ENCODE measurements at regions of chr12 and their contacts with region 1.

Region 1: DNA sequence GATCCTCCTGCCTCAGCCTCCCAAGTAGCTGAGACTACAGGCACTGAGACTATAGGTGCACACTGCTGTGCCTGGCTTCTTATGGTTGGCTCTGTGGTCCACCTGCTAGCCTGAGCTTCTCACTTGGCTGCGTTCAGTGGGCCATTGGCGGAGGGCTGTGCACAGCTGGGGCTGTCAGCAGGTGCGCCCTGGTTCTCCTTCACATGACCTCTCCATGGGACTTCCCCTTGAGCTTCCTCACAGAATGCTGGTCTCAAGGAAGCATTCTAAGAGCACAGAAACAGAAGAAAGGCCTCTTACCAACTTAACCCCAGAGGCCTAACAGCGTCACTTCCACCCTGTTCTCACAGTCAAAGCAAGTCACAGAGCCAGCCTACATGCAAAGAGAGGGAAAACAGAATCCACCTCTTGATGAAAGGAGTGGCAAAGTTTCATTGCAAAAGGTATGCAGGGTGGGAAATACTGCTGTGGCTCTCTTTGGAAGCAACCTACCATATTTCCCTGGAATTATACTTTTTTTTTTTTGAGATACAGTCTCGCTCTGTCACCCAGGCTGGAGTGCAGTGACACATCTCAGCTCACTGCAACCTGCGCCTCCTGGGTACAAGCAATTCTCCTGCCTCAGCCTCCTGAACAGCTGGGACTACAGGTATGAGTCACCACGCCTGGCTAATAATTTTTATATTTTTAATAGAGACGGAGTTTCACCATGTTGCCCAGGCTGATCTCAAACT is 9.3 kb downstream of the RILPL2 start:
- DNase-seq: peak; percentile 67
- ATAC-seq: peak; percentile 88
- H3K4me3 Mint-ChIP-seq: peak overlapping the region; percentile 75
- H3K27ac Mint-ChIP-seq: peak overlapping the region; percentile 93
- H3K4me1 Mint-ChIP-seq: peaks cover 39% of the 10 kb centered on the region
- H3K27me3 Mint-ChIP-seq: no peaks in the 10 kb centered on the region
- CTCF ChIP-seq: no peak

Region 2: GRCh38 chr12:123126186-123127006 is 300.8 kb before region 1 on chr12:
- CTCF ChIA-PET with region 1: no interaction called
- POLR2A ChIA-PET with region 1: no interaction called
- intact Hi-C with region 1: no loop called
- DNase-seq: no peak
- ATAC-seq: no peak
- H3K4me3 Mint-ChIP-seq: no peak overlapping the region
- H3K27ac Mint-ChIP-seq: no peak overlapping the region
- H3K4me1 Mint-ChIP-seq: peaks cover 47% of the 10 kb centered on the region
- H3K27me3 Mint-ChIP-seq: peaks cover 3% of the 10 kb centered on the region
- CTCF ChIP-seq: no peak

Region 3: GRCh38 chr12:123382684-123383083 is 44.5 kb before region 1 on chr12:
- CTCF ChIA-PET with region 1: no interaction called
- POLR2A ChIA-PET with region 1: interaction called, 12 read pairs
- intact Hi-C with region 1: loop called (anchors 1 kb)
- DNase-seq: no peak
- ATAC-seq: no peak
- H3K4me3 Mint-ChIP-seq: peak overlapping the region; percentile 60
- H3K27ac Mint-ChIP-seq: no peak overlapping the region
- H3K4me1 Mint-ChIP-seq: peaks cover 16% of the 10 kb centered on the region
- H3K27me3 Mint-ChIP-seq: no peaks in the 10 kb centered on the region
- CTCF ChIP-seq: no peak

Region 4: GRCh38 chr12:123401753-123402683 is 25.2 kb before region 1 on chr12:
- CTCF ChIA-PET with region 1: no interaction called
- POLR2A ChIA-PET with region 1: interaction called, 11 read pairs
- intact Hi-C with region 1: loop called (anchors 1 kb)
- DNase-seq: no peak
- ATAC-seq: no peak
- H3K4me3 Mint-ChIP-seq: no peak overlapping the region
- H3K27ac Mint-ChIP-seq: peak overlapping the region; percentile 8
- H3K4me1 Mint-ChIP-seq: peaks cover 8% of the 10 kb centered on the region
- H3K27me3 Mint-ChIP-seq: no peaks in the 10 kb centered on the region
- CTCF ChIP-seq: no peak

Region 5: DNA sequence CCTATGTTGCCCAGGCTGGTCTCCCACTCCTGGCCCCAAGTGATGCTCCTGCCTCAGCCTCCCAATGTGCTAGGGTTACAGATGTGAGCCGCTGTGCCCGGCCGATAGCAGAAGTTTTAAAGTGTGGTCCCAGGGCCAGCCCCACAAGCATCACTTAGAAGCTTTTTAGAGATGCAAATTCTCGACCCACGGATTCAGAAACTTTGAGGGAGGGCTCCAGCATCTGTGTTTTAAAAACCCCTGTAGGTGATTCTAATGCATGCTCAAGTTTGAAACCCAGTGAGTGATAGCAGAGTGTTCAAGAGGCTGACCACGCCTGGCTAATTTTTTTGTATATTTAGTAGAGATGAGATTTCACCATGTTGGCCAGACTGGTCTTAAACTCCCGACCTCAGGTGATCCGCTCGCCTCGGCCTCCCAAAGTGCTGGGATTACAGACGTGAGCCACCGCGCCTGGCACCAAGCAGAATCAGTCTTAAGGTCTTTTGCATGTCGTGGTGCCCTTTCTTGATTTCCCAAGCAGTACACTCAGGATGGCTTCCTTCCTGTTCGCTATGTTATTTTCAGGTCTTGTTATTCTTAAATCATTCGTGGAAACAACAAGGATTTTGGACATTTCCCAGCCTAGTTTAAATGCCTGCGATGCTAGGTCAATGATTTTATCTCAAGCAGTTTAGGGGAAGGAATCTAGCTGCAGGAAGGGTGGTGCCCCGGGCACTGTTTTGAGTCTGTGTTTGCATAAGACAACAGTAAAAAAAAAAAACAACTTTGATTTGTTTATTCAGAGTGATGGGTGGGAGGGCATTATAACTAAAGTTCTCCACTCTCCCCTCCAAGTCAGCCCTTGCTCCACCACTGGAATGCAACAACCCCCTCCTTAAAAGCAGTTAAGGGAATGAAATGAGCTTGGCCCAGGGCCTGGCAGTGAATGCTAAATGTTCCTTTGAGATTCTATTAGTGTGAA is 18.5 kb after region 1 on chr12:
- CTCF ChIA-PET with region 1: interaction called, 5 read pairs
- POLR2A ChIA-PET with region 1: interaction called, 29 read pairs
- intact Hi-C with region 1: loop called (anchors 1 kb)
- DNase-seq: no peak
- ATAC-seq: peak; percentile 53
- H3K4me3 Mint-ChIP-seq: peak overlapping the region; percentile 75
- H3K27ac Mint-ChIP-seq: peak overlapping the region; percentile 93
- H3K4me1 Mint-ChIP-seq: peaks cover 59% of the 10 kb centered on the region
- H3K27me3 Mint-ChIP-seq: no peaks in the 10 kb centered on the region
- CTCF ChIP-seq: no peak

Region 6: DNA sequence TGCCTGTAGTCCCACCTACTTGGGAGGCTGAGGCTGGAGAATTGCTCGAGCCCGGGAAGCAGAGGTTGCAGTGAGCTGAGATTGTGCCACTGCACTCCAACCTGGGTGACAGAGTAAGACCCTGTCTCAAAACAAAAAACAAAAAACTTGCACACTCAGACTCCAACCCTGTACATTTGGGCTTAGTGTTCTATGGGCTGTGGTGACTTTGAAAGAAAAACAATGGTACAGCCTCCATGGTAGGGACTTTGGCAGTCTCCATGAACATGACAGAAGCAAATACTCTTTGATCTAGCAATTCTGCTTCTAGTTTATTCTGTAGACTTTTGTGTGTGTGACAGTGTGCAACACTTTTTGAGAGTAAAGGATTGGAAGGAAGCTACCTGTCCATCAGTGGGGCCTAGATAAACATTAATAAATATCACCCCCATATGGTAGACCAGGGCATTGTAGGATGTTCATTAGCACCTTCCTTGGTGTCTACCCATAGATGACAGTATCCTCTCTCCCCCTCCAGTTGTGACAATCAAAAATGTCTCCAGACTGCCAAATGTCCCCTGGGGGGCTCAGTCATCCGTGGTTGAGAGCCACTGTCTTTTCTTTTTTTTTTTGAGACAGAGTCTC is 41.5 kb after region 1 on chr12:
- CTCF ChIA-PET with region 1: interaction called, 3 read pairs
- POLR2A ChIA-PET with region 1: interaction called, 6 read pairs
- intact Hi-C with region 1: loop called (anchors 2 kb)
- DNase-seq: no peak
- ATAC-seq: peak; percentile 95
- H3K4me3 Mint-ChIP-seq: no peak overlapping the region
- H3K27ac Mint-ChIP-seq: peak overlapping the region; percentile 42
- H3K4me1 Mint-ChIP-seq: peaks cover 6% of the 10 kb centered on the region
- H3K27me3 Mint-ChIP-seq: no peaks in the 10 kb centered on the region
- CTCF ChIP-seq: no peak